GM12878 (cell line): ENCODE measurements at regions of chr1 and their contacts with region 1.

Region 1: GRCh38 chr1:26472901-26473845 is 933 bp downstream of the HMGN2 start:
- DNase-seq: peak; percentile 67
- ATAC-seq: peak; percentile 81
- H3K4me3 ChIP-seq: peak overlapping the region; percentile 84
- H3K27ac ChIP-seq: peak overlapping the region; percentile 98
- H3K4me1 ChIP-seq: peaks cover 19% of the 10 kb centered on the region
- H3K27me3 ChIP-seq: no peaks in the 10 kb centered on the region
- CTCF ChIP-seq: no peak
- EP300 ChIP-seq: no peak
- POLR2A ChIP-seq: peak; percentile 53
- RAD21 ChIP-seq: no peak

Region 2: GRCh38 chr1:26145041-26145959 is 327.9 kb before region 1 on chr1:
- CTCF ChIA-PET with region 1: no interaction called
- POLR2A ChIA-PET with region 1: no interaction called
- RAD21 ChIA-PET with region 1: no interaction called
- SMC1A ChIA-PET with region 1: no interaction called
- in situ Hi-C with region 1: no loop called
- intact Hi-C with region 1: no loop called
- DNase-seq: no peak
- ATAC-seq: peak; percentile 95
- H3K4me3 ChIP-seq: no peak overlapping the region
- H3K27ac ChIP-seq: no peak overlapping the region
- H3K4me1 ChIP-seq: no peaks in the 10 kb centered on the region
- H3K27me3 ChIP-seq: no peaks in the 10 kb centered on the region; a peak in 2 of 4 replicates
- CTCF ChIP-seq: peak; percentile 74 to 82 (median 76)
- EP300 ChIP-seq: no peak
- POLR2A ChIP-seq: no peak
- RAD21 ChIP-seq: peak; percentile 86

Region 3: DNA sequence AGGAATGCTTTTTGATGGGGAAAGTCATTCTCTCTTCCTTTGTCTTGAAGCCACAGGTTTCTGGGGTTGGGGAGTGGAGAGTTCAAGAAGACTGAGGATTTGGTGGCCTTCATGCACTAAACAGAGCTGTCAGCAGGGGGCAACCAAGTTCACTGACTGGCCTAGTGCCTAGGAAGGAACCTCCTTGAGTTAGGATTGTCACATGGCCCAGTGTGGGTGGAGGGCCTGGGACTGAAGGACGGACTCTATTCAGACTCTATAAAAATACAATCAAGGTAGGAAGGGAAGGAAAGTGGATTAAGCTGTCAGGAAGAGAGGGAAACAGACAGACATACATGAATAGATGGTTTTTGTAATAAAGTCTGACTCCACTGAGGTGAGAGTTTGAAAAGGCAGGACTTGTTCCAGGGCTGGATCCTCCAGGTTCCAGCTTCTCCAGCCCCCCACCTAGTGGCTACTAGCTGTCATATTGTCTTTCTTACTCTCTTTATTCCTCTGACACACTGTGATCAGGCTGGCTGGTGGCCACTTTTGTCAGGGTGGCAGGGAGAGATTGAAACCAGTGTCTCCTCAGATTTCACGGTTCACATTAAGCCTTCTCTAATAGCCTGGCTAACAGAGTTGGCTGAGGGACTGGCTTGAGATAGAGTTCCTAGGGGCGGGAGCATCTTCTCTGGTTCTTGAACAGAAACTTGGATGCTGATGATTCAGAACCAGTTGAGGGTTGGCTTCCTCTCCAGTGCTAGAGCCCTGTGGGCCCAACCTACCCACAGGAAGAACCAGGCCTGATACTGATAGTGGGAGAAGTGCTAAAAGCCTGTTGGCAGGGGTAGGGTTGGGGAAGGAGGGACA is 197.4 kb before region 1 on chr1:
- CTCF ChIA-PET with region 1: no interaction called
- POLR2A ChIA-PET with region 1: no interaction called
- RAD21 ChIA-PET with region 1: no interaction called
- SMC1A ChIA-PET with region 1: no interaction called
- in situ Hi-C with region 1: no loop called
- intact Hi-C with region 1: no loop called
- DNase-seq: no peak
- ATAC-seq: peak; percentile 64
- H3K4me3 ChIP-seq: no peak overlapping the region
- H3K27ac ChIP-seq: peak overlapping the region; percentile 52; the same call in 1 of the 2 replicates
- H3K4me1 ChIP-seq: peaks cover 36% of the 10 kb centered on the region
- H3K27me3 ChIP-seq: no peaks in the 10 kb centered on the region
- CTCF ChIP-seq: peak; percentile 86 to 89 (median 88)
- EP300 ChIP-seq: no peak
- POLR2A ChIP-seq: no peak
- RAD21 ChIP-seq: peak; percentile 83

Region 4: DNA sequence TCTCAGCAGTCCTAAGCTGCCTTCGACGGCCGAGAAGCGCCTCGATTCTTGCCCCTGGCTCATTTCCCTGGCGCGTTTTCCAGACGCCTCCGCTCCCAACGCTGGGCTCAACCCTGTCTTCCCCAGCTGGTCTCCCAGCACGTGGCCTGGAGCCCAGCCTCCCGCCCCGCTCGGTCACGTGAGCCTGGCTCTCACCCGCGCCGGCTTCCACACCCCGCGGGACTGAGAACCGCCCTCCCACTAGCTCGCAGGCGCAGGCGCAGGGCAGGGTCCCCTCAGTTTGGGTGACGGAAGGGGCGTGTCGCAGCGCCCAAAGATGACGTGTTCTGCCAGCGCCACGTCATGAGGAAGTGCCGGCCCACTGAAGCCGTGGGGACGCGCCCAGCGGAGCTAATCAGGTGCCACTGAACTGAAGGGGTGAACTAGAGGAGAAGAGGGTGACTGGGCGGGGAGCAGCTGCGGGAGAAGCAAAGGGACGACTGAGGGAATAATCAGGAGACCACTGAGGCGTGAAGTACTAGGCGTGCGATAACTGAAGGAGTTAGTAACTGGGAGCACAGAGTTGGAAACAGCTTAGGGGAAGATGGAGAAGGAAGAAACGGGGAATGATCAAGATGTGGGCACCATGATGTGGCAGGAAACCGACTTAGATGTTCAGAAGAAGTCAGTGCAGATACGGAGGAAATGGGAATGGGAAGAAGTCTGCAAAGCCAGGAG is 41.0 kb before region 1 on chr1 and contains the start of gene DHDDS:
- CTCF ChIA-PET with region 1: interaction called, 23 read pairs
- POLR2A ChIA-PET with region 1: interaction called, 24 read pairs
- RAD21 ChIA-PET with region 1: no interaction called
- SMC1A ChIA-PET with region 1: no interaction called
- in situ Hi-C with region 1: no loop called
- intact Hi-C with region 1: no loop called
- DNase-seq: peak; percentile 95
- ATAC-seq: peak; percentile 99
- H3K4me3 ChIP-seq: peak within 1 kb of the TSS; percentile 98
- H3K27ac ChIP-seq: peak within 1 kb of the TSS; percentile 59
- H3K4me1 ChIP-seq: peaks cover 9% of the 10 kb centered on the region
- H3K27me3 ChIP-seq: no peaks in the 10 kb centered on the region
- CTCF ChIP-seq: no peak
- EP300 ChIP-seq: no peak
- POLR2A ChIP-seq: peak; percentile 96
- RAD21 ChIP-seq: no peak
- polyA plus RNA-seq, gene DHDDS: 22.7 to 27.2 TPM

Region 5: GRCh38 chr1:26459573-26460031 is 13.6 kb before region 1 on chr1:
- CTCF ChIA-PET with region 1: interaction called, 14 read pairs
- POLR2A ChIA-PET with region 1: interaction called, 3 read pairs
- RAD21 ChIA-PET with region 1: no interaction called
- SMC1A ChIA-PET with region 1: no interaction called
- in situ Hi-C with region 1: no loop called
- intact Hi-C with region 1: no loop called
- DNase-seq: no peak
- ATAC-seq: no peak
- H3K4me3 ChIP-seq: no peak overlapping the region
- H3K27ac ChIP-seq: no peak overlapping the region
- H3K4me1 ChIP-seq: no peaks in the 10 kb centered on the region
- H3K27me3 ChIP-seq: no peaks in the 10 kb centered on the region
- CTCF ChIP-seq: no peak
- EP300 ChIP-seq: no peak
- POLR2A ChIP-seq: no peak
- RAD21 ChIP-seq: no peak